Activated naive CD4-positive, alpha-beta T cell treated with anti-CD3 and anti-CD28 coated beads for 36 hours (primary cell): ENCODE measurements at regions of chr18 and their contacts with region 1.

Region 1: DNA sequence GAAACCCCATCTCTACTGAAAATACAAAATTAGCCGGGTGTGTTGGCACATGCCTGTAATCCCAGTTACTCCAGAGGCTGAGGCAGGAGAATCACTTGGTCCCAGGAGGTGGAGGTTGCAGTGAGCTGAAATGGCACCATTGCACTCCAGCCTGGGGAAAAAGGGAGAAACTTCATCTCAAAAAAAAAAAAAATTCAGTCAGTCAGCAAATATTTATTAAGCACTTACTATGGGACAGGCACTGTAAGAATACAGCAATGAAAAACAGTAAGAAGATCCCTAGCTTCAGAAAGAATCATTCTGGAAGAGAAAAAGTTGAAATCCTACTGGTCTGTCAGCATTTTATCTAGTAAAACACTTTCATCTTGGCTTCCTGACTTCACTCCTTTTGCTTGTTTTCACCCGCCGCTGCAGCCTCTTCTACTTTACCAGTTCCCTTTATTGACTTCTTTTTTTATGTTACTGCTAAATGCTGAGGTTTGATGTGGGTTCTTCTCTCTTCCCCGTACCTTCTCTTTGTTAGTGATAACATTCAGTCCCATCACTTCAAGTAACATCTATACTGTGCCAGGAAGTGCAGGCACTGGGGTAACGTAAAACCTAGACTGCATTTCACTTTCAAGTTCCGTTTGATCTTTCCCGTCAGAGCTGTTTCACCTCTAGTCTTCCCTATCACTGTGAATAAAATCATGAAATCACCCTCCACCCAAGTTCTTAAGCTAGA is 10.8 kb upstream of the TAF4B start:
- DNase-seq: peak; percentile 82
- H3K4me3 Mint-ChIP-seq: peak overlapping the region; percentile 44
- H3K27ac Mint-ChIP-seq: peak overlapping the region; percentile 88
- H3K4me1 Mint-ChIP-seq: peaks cover 33% of the 10 kb centered on the region
- H3K27me3 Mint-ChIP-seq: no peaks in the 10 kb centered on the region

Region 2: GRCh38 chr18:25262920-25263319 is 952.5 kb before region 1 on chr18:
- CTCF ChIA-PET with region 1: no interaction called
- intact Hi-C with region 1: no loop called
- DNase-seq: no peak
- H3K4me3 Mint-ChIP-seq: no peak overlapping the region
- H3K27ac Mint-ChIP-seq: no peak overlapping the region
- H3K4me1 Mint-ChIP-seq: no peaks in the 10 kb centered on the region
- H3K27me3 Mint-ChIP-seq: peaks cover 11% of the 10 kb centered on the region

Region 3: DNA sequence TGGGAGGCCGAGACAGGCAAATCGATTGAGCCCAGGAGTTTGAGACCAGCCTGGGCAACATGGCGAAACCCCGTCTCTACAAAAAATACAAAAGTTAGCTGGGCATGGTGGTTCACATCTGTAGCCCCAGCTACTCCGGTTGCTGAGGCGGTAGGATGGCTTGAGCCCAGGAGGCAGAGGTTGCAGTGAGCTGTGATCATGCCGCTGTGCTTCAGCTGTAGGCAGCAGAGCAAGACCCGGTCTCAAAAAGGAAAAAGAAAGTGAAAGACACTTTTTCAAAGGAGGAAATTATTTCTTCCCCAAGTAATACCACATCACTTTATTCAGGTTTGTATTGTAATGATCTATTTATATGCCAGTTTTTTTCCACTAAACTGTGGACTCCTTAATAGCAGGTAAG is 24.9 kb before region 1 on chr18:
- CTCF ChIA-PET with region 1: no interaction called
- intact Hi-C with region 1: loop called (anchors 1 kb)
- DNase-seq: peak; percentile 49
- H3K4me3 Mint-ChIP-seq: peak overlapping the region; percentile 74
- H3K27ac Mint-ChIP-seq: peak overlapping the region; percentile 63
- H3K4me1 Mint-ChIP-seq: peaks cover 13% of the 10 kb centered on the region
- H3K27me3 Mint-ChIP-seq: no peaks in the 10 kb centered on the region

Region 4: GRCh38 chr18:26290385-26290784 is 75.0 kb after region 1 on chr18:
- CTCF ChIA-PET with region 1: no interaction called
- intact Hi-C with region 1: loop called (anchors 1 kb)
- DNase-seq: no peak
- H3K4me3 Mint-ChIP-seq: no peak overlapping the region
- H3K27ac Mint-ChIP-seq: no peak overlapping the region
- H3K4me1 Mint-ChIP-seq: peaks cover 6% of the 10 kb centered on the region
- H3K27me3 Mint-ChIP-seq: no peaks in the 10 kb centered on the region

Region 5: GRCh38 chr18:26397019-26397418 is 181.6 kb after region 1 on chr18:
- CTCF ChIA-PET with region 1: no interaction called
- intact Hi-C with region 1: no loop called
- DNase-seq: no peak
- H3K4me3 Mint-ChIP-seq: no peak overlapping the region
- H3K27ac Mint-ChIP-seq: no peak overlapping the region
- H3K4me1 Mint-ChIP-seq: no peaks in the 10 kb centered on the region
- H3K27me3 Mint-ChIP-seq: no peaks in the 10 kb centered on the region